Activated T-helper 2 cell treated with anti-CD3 and anti-CD28 coated beads, Interferon-gamma antibody, Interleukin-2, Interleukin-4, amounts not matched to agents 10 μg/mL and 5 μg/mL and 100 μg/mL, durations not matched to agents 14 hours and 24 hours and 36 hours (primary cell): ENCODE measurements at regions of chr1 and their contacts with region 1.

Region 1: DNA sequence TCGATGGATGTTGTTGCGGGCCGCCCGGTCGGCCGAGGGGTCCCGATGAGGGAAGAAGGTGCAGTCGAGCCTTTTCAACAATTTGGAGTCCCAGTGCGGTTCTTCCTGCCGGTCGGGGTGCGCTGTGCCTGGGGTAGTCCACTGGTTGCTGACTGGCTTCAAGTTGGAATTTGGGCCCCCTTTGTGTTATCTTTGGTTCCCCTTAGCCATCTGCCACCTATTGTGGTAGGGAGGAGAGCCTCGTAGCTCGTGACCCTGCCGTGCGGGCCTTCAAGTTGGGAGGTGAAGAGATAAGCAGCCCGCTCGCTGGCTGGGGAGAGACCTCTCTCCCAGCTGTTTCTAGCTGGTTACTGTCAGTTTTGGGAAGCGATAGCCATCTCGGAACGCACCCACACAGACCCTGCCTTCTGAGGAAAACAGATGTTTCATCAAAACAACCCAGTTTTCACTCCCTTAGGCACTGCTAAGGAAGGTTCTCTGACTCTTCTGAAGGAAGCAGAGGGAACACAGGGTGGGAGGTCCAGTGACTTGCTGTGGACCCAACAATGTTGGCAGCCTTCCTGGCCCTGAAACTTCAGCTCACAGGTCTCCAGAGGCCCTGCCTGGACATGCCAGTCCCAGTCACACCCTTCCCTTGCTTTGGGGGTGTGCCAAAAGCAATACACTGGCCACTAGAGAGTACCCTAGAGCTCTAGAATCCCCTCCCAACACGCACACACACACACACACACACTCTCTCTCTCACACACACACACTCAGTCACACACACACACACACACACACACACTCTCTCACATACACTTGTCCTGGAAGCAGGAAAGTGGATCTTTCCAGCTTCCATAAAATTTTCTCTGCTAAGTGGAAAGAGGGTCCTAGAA is 1.0 kb downstream of the BTG2 start:
- DNase-seq: peak; percentile 41
- H3K4me3 Mint-ChIP-seq: peak overlapping the region; percentile 99
- H3K27ac Mint-ChIP-seq: peak overlapping the region; percentile 87
- H3K4me1 Mint-ChIP-seq: peaks cover 54% of the 10 kb centered on the region
- H3K27me3 Mint-ChIP-seq: no peaks in the 10 kb centered on the region

Region 2: DNA sequence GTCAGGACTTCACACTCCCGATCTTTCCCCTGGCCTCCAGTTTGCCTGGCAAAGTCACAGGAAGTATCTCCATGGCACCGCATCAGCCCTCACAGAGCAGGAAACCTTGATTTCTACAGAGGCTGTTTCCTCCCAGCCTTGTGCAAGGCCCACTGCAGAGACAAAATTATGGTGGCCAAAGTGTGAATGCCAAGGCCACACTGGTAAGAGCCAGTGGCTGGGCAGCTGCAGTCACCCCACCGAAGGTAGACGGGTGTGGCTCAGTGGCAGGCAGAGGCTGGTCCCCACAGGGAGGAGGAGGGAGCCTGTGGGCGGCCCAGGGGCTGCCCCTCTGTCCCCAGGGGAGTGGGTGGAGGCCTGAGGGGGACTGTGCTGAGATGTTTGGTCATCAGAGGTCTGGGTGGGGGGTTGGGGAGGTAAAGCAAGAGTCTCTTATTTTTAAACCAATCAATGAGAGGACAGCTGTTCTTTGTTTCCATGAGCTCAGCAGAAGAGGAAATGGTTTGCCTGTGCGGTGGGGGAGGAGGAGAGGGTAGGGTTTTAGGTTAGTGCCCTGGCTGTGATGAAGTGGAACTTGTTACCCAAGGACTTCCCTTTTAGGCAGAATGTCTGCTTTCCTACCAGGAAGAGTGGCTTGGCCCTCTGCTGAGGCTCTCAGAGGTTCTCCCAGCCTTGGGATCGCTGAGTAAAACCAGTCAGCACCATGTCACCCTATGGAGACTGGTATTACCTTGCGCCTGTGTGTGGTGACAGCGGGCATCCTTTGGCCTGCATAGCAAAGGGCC is 19.0 kb before region 1 on chr1:
- intact Hi-C with region 1: loop called (anchors 1 kb)
- DNase-seq: peak; percentile 82
- H3K4me3 Mint-ChIP-seq: peak overlapping the region; percentile 76
- H3K27ac Mint-ChIP-seq: peak overlapping the region; percentile 99
- H3K4me1 Mint-ChIP-seq: peaks cover 66% of the 10 kb centered on the region
- H3K27me3 Mint-ChIP-seq: no peaks in the 10 kb centered on the region

Region 3: GRCh38 chr1:203320591-203321272 is 14.4 kb after region 1 on chr1:
- intact Hi-C with region 1: loop called (anchors 1 kb)
- DNase-seq: peak; percentile 67
- H3K4me3 Mint-ChIP-seq: peak overlapping the region; percentile 1
- H3K27ac Mint-ChIP-seq: peak overlapping the region; percentile 51
- H3K4me1 Mint-ChIP-seq: peaks cover 67% of the 10 kb centered on the region
- H3K27me3 Mint-ChIP-seq: peaks cover 5% of the 10 kb centered on the region

Region 4: GRCh38 chr1:203381151-203381751 is 74.9 kb after region 1 on chr1:
- intact Hi-C with region 1: no loop called
- DNase-seq: no peak
- H3K4me3 Mint-ChIP-seq: no peak overlapping the region
- H3K27ac Mint-ChIP-seq: no peak overlapping the region
- H3K4me1 Mint-ChIP-seq: no peaks in the 10 kb centered on the region
- H3K27me3 Mint-ChIP-seq: peaks cover 13% of the 10 kb centered on the region